AG04450 (cell line): ENCODE measurements at regions of chr2 and their contacts with region 1.

Region 1: DNA sequence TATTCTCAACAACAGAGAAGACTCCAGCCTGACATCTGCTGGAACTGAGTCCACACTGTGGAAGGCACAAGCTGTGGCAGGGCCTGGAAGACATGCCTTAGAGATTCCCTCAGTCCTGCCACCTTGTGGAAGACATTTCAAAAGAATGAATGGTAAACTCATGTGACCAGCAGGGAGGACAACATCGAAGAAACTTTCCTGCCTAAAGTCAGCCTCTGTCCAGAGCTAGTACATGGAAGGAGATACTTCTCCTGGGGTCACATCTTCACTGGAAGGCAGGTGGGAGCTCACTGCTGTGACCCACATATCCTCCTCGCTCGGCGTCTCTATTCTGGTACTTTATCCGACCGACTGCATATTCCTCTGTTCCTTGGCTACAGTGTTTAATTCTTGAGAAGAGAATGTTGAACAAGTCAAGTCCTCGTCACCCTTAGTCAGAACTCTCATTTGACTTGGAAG is 59.5 kb downstream of the PUM2 start:
- DNase-seq: peak; percentile 44
- H3K4me3 ChIP-seq: no peak overlapping the region
- H3K27ac ChIP-seq: no peak overlapping the region
- H3K27me3 ChIP-seq: no peaks in the 10 kb centered on the region
- CTCF ChIP-seq: peak; percentile 70

Region 2: DNA sequence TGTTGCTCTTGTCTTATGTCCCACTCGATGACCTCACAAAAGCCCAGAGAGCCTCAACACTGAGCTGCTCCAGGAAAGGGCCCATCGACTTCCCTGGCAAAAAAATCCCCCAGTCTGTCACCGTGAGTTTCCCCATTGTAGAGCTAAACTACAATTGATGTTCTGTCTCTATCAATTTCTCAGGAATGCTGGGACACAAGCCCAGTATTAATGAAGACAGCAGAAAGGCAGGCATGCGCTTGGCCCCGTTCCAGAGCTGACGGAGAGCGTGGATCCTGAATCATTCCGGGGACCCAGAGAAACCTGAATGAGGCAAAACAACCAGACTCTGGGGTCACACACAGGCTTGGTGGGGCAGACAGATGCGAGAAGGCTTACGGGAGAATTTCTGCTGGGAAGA is 536.2 kb before region 1 on chr2:
- CTCF ChIA-PET with region 1: no interaction called
- POLR2A ChIA-PET with region 1: no interaction called
- DNase-seq: no peak
- H3K4me3 ChIP-seq: no peak overlapping the region
- H3K27ac ChIP-seq: no peak overlapping the region
- H3K27me3 ChIP-seq: no peaks in the 10 kb centered on the region
- CTCF ChIP-seq: no peak

Region 3: GRCh38 chr2:20061476-20061875 is 229.7 kb before region 1 on chr2:
- CTCF ChIA-PET with region 1: no interaction called
- POLR2A ChIA-PET with region 1: no interaction called
- DNase-seq: peak; percentile 38
- H3K4me3 ChIP-seq: no peak overlapping the region
- H3K27ac ChIP-seq: peak overlapping the region; percentile 94
- H3K27me3 ChIP-seq: no peaks in the 10 kb centered on the region
- CTCF ChIP-seq: no peak

Region 4: DNA sequence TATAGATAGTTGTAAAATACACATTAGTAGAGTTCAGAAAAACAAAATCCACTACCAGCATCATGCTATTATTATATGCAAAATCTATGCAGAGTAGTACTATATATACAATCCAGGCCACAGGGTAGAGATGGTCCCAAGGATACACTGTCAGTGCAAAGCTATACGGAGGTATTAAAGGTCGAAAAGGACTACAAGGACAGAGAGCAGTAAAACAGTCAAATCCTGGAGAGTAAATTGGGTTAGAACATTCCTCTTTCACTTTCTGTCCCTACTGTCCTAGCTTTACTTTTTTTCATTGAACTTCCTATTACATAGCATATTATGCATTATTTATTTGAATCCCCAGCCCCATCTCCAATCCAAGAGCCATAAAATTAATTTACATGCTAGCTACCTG is 26.5 kb before region 1 on chr2:
- CTCF ChIA-PET with region 1: interaction called, 19 read pairs
- POLR2A ChIA-PET with region 1: no interaction called
- DNase-seq: no peak
- H3K4me3 ChIP-seq: no peak overlapping the region
- H3K27ac ChIP-seq: no peak overlapping the region
- H3K27me3 ChIP-seq: no peaks in the 10 kb centered on the region
- CTCF ChIP-seq: no peak

Region 5: GRCh38 chr2:20304411-20304810 is 13.3 kb after region 1 on chr2:
- CTCF ChIA-PET with region 1: interaction called, 14 read pairs
- POLR2A ChIA-PET with region 1: interaction called, 3 read pairs
- DNase-seq: peak; percentile 15
- H3K4me3 ChIP-seq: no peak overlapping the region
- H3K27ac ChIP-seq: no peak overlapping the region
- H3K27me3 ChIP-seq: no peaks in the 10 kb centered on the region
- CTCF ChIP-seq: no peak